ENCODE measurements at regions of chr11 and their contacts with region 1.

Region 1: GRCh38 chr11:93895106-93895862 is 44.9 kb upstream of the VSTM5 start:
- DNase-seq: peak; percentile 73
- H3K4me3 Mint-ChIP-seq: no peak overlapping the region
- H3K27ac Mint-ChIP-seq: no peak overlapping the region
- H3K4me1 Mint-ChIP-seq: no peaks in the 10 kb centered on the region
- H3K27me3 Mint-ChIP-seq: peaks cover 37% of the 10 kb centered on the region
- CTCF ChIP-seq: peak; percentile 85

Region 2: DNA sequence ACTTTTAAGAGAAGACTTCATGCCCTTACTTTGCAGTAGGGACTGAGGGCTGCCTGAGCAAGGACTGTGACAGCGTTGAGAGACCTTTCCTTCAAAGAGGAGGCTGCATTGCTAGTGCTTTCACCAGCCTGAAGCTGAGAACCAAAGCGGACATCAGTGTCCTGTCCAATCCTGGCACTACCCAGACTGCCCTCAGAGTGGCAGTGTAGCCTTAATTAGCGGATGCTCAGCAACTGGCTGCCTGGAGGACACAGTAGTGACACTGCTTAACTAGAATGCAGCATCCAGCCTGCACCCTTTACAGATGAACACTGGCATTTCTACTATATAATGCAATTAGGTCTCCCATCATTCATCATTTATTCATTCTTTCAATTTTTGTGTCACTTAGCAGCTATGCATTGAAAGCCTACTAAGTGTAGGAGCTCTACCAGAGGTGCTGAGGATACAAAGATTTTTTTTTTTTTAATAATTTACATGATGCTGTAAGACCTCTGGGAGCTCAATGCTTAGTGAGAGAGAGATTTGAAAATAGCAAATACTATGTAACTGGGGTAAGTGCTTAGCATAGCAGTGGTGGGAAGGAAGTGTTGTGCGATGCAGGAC is 660.6 kb before region 1 on chr11:
- CTCF ChIA-PET with region 1: no interaction called
- POLR2A ChIA-PET with region 1: no interaction called
- intact Hi-C with region 1: loop called (anchors 5 kb)
- DNase-seq: peak; percentile 80
- H3K4me3 Mint-ChIP-seq: no peak overlapping the region
- H3K27ac Mint-ChIP-seq: no peak overlapping the region
- H3K4me1 Mint-ChIP-seq: no peaks in the 10 kb centered on the region
- H3K27me3 Mint-ChIP-seq: peaks cover 22% of the 10 kb centered on the region
- CTCF ChIP-seq: peak; percentile 91

Region 3: DNA sequence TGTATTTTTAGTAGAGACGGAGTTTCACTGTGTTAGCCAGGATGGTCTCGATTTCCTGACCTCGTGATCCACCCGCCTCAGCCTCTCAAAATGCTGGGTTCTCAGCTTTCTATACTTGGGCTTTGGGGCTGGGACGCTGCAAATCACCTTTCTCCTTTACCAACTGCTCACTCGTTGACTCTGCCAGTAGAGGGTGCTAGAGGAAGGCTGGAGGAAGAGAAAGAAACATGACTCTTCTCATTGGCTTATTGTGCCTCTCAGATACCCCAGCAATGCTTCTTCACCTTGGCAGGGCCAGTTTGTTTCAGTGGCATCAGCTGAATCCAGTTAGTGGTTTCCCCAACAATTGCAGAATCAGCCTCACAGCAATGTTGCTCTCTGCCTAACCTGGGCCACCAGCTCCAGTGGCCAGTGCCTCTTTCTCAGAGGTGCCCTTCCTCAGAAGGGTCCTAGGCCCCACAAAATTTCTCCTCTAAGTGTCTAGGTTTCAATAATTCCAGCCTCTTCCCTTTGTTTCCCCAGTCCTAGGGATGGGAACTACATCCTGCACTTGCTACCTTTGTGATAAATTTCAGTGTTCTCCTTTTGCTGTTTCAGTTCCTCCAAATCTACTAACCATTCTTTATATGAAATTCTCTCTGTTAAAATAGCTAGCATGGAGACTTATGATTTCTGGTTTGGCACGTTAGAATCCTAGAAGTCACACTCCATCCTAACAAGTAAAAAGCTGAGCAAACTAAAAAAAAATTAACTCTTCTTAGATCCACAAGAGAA is 26.6 kb after region 1 on chr11:
- CTCF ChIA-PET with region 1: interaction called, 44 read pairs
- POLR2A ChIA-PET with region 1: no interaction called
- intact Hi-C with region 1: no loop called
- DNase-seq: peak; percentile 84
- H3K4me3 Mint-ChIP-seq: no peak overlapping the region
- H3K27ac Mint-ChIP-seq: no peak overlapping the region
- H3K4me1 Mint-ChIP-seq: no peaks in the 10 kb centered on the region
- H3K27me3 Mint-ChIP-seq: no peaks in the 10 kb centered on the region
- CTCF ChIP-seq: peak; percentile 78

Region 4: GRCh38 chr11:94028436-94028835 is 133.2 kb after region 1 on chr11:
- CTCF ChIA-PET with region 1: no interaction called
- POLR2A ChIA-PET with region 1: no interaction called
- intact Hi-C with region 1: no loop called
- DNase-seq: no peak
- H3K4me3 Mint-ChIP-seq: no peak overlapping the region
- H3K27ac Mint-ChIP-seq: no peak overlapping the region
- H3K4me1 Mint-ChIP-seq: no peaks in the 10 kb centered on the region
- H3K27me3 Mint-ChIP-seq: peaks cover 3% of the 10 kb centered on the region
- CTCF ChIP-seq: no peak

Region 5: DNA sequence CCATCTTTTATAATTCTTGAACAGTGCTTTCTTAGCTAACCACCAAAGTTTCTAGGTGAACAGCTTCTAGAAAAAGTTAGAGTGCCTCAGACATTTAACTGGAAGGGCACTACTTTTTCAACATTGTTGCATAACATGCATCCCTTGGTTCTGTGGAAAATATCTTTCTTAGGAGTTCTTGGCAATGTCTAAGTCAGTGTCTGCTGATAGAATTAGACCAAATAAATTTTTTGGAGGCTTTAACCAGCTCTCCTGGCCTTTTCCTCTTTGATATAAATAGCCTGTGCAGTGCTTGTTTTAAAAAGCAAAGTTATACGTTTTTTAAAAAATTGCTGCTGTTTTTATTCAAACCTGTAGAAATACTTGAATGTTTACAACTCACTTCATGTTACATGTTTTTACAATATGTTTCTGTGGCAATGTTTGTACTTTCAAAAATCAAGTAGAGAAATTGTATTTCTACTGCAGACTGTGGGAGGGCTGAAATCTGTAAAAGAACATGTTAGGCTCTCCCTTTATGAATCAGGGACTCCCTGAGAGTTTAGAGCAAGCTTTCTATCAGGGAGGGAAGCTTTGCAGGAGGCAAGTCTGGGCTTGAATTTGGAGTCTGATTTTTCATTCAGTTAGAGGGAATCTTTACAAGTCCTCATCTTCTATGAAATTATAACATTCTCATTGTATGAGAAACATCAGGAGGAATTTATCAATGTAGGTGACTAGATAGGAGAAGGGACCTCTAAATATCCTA is 217.1 kb after region 1 on chr11:
- CTCF ChIA-PET with region 1: interaction called, 21 read pairs
- POLR2A ChIA-PET with region 1: no interaction called
- intact Hi-C with region 1: loop called (anchors 2 kb)
- DNase-seq: peak; percentile 40
- H3K4me3 Mint-ChIP-seq: no peak overlapping the region
- H3K27ac Mint-ChIP-seq: peak overlapping the region; percentile 57
- H3K4me1 Mint-ChIP-seq: peaks cover 33% of the 10 kb centered on the region
- H3K27me3 Mint-ChIP-seq: no peaks in the 10 kb centered on the region
- CTCF ChIP-seq: no peak

Region 6: GRCh38 chr11:94417386-94417987 is 522.2 kb after region 1 on chr11:
- CTCF ChIA-PET with region 1: interaction called, 56 read pairs
- POLR2A ChIA-PET with region 1: no interaction called
- intact Hi-C with region 1: loop called (anchors 1 kb)
- DNase-seq: peak; percentile 44
- H3K4me3 Mint-ChIP-seq: no peak overlapping the region
- H3K27ac Mint-ChIP-seq: no peak overlapping the region
- H3K4me1 Mint-ChIP-seq: no peaks in the 10 kb centered on the region
- H3K27me3 Mint-ChIP-seq: no peaks in the 10 kb centered on the region
- CTCF ChIP-seq: peak; percentile 47

Region 7: GRCh38 chr11:94519478-94520084 is 624.3 kb after region 1 on chr11:
- CTCF ChIA-PET with region 1: interaction called, 10 read pairs
- POLR2A ChIA-PET with region 1: no interaction called
- intact Hi-C with region 1: no loop called
- DNase-seq: peak; percentile 40
- H3K4me3 Mint-ChIP-seq: no peak overlapping the region
- H3K27ac Mint-ChIP-seq: no peak overlapping the region
- H3K4me1 Mint-ChIP-seq: peaks cover 5% of the 10 kb centered on the region
- H3K27me3 Mint-ChIP-seq: no peaks in the 10 kb centered on the region
- CTCF ChIP-seq: peak; percentile 44